ENCODE measurements at regions of chr1 and their contacts with region 1.

Region 1: DNA sequence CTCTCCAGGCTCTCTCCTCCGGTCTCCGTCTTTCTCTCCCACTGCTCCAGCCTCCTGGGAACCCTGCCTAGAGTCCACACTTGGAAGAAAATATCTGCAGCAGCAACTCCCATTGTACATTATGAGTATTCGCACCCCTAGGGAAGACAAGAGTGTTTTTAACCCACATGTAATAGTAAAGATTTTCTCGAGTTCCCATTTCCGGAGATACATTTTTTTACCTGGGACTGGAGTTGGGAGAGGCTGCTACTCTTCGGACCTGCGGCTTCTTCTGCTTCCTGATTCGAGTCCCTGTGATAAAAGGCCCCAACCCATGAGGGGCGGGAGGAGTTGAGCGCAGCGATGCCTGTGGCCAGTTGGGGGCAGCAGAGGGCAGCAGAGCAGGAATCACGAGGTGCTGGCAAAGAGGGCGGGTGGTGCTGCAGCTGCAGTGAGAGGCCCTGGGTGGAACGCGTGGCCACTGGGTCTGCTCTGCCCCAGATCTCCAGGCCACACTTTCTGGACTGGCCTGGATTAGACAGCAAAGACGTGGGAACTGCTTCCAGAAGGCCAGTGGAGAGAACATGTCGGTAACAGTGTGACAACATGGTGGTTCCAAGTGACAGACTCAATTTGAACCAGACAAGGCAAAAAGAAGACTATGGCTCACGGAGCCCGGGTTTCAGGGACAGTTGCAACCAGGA is 221.0 kb upstream of the CSF3R start:
- DNase-seq: peak; percentile 67 to 90 (median 80)
- ATAC-seq: peak; percentile 83 to 100 (median 98)
- H3K4me3 ChIP-seq: no peak overlapping the region
- H3K27ac ChIP-seq: no peak overlapping the region
- H3K4me1 ChIP-seq: no peaks in the 10 kb centered on the region
- H3K27me3 ChIP-seq: peaks cover 0 to 8% (median 0%) of the 10 kb centered on the region in 4 donors
- CTCF ChIP-seq: peak; percentile 67 to 89 (median 76)

Region 2: DNA sequence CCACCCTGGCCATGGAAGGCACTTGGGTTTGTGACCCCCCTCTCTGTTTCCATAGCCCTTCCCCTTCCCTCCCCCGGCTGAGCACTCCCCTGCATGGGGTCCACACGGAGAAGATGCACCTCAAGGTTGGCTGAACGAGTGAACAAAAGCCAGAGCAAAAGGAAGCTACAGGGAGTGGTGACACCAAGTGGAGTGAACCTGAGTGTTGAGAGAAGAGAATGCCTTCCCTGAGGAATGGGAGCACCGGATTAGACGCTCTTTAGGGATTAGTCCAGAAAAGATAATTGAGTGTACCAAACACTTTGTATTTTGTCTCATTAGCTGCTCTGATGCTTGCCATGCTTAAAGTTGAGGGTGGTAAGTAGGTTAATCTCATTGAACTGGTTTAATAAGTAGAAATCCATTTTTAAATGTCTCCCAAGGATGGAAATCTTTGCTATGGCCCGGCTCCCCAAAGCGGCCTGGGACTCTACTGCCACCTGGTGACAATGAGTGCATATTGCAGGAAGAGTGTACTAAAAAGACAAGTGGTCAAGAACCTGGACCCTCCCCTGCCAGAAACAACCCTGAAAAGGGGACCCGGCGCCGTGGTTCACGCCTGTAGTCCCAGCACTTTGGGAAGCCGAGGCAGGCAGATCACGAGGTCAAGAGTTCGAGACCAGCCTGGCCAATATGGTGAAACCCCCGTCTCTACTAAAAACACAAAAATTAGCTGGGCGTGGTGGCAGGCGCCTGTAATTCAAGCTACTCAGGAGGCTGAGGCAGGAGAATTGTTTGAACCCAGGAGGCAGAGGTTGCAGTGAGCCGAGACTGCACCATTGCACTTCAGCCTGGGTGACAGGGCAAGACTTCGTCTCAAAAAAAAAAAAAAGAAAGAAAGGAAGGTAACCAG is 620.1 kb after region 1 on chr1:
- intact Hi-C with region 1: loop called in 2 of 3 experiments (anchors 10 kb)
- DNase-seq: peak in 2 of 6 donors; percentile 40 to 58
- ATAC-seq: peak in 1 of 4 donors; percentile 52
- H3K4me3 ChIP-seq: no peak overlapping the region
- H3K27ac ChIP-seq: no peak overlapping the region
- H3K4me1 ChIP-seq: no peaks in the 10 kb centered on the region
- H3K27me3 ChIP-seq: no peaks in the 10 kb centered on the region
- CTCF ChIP-seq: peak; percentile 40 to 58 (median 50)

Region 3: DNA sequence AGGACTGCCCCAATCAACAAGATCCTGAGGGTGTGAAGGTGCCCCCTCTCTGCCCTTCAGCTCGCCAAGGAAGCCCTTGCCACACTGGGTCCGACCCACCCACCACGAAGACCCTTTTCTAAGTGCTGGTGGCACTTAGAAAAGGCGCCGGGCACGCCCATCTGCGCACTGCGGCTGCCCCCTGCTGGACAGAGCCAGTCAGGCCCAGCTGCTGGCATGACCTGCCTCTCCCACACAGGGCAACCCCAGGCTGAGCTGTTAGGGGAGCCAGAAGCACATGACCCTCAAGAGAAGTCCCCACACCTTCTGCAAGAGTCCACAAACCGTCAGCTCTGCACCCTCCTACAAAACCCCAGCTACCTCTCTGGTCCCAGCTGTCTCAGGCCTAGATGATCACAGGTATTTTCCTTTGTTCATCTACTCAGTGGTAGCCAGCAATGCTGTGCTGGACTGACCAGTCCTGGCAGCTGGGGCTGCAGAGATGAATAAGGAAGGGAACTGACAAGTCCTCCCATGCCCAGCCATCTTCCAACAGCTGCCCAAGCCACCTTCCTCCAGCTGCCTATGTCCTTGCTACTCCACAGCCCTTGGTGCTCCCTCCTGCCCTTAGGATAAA is 730.7 kb after region 1 on chr1:
- intact Hi-C with region 1: loop called in 2 of 3 experiments (anchors 5 to 10 kb)
- DNase-seq: peak; percentile 42 to 94 (median 74)
- ATAC-seq: peak; percentile 79 to 94 (median 92)
- H3K4me3 ChIP-seq: no peak overlapping the region
- H3K27ac ChIP-seq: no peak overlapping the region
- H3K4me1 ChIP-seq: no peaks in the 10 kb centered on the region
- H3K27me3 ChIP-seq: no peaks in the 10 kb centered on the region
- CTCF ChIP-seq: peak; percentile 85 to 91 (median 88)